GM12878 (cell line): ENCODE measurements at regions of chr14 and their contacts with region 1.

Region 1: GRCh38 chr14:55191203-55192053 is at the start of gene DLGAP5:
- DNase-seq: peak; percentile 98
- ATAC-seq: peak; percentile 98
- H3K4me3 ChIP-seq: peak within 1 kb of the TSS; percentile 85
- H3K27ac ChIP-seq: peak within 1 kb of the TSS; percentile 77
- H3K4me1 ChIP-seq: peaks cover 4% of the 10 kb centered on the region; the same call in 1 of the 2 replicates
- H3K27me3 ChIP-seq: no peaks in the 10 kb centered on the region
- CTCF ChIP-seq: no peak
- EP300 ChIP-seq: no peak
- POLR2A ChIP-seq: peak; percentile 77
- RAD21 ChIP-seq: no peak
- polyA plus RNA-seq, gene DLGAP5: 57.9 to 68.4 TPM

Region 2: DNA sequence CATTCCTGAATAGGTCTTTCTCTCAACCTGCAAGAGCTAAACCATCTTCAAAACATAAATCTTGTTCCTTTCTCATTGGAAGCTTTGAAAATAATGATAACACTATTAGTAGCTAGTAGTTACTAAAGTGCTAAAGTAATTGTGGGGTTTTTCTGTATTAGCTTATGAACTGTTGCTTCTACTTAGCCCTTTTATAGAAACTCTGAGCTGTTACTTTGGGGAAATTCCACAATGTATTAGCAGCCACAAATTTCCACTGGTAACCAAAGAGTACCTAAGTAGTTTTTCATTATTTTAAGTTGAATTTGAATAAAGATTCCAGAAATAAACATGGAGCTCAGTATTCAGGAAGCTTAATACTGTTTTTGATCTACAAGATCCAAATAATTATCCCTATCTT is 146.3 kb before region 1 on chr14:
- CTCF ChIA-PET with region 1: interaction called, 3 read pairs
- POLR2A ChIA-PET with region 1: interaction called, 11 read pairs
- RAD21 ChIA-PET with region 1: no interaction called
- SMC1A ChIA-PET with region 1: no interaction called
- in situ Hi-C with region 1: no loop called
- intact Hi-C with region 1: no loop called
- DNase-seq: no peak
- ATAC-seq: peak; percentile 82
- H3K4me3 ChIP-seq: no peak overlapping the region
- H3K27ac ChIP-seq: peak overlapping the region; percentile 19; the same call in 1 of the 2 replicates
- H3K4me1 ChIP-seq: 0 out of 2 replicates have a peak, but pooled peaks cover 4% of the 10 kb centered on the region
- H3K27me3 ChIP-seq: no peaks in the 10 kb centered on the region
- CTCF ChIP-seq: no peak
- EP300 ChIP-seq: no peak
- POLR2A ChIP-seq: no peak
- RAD21 ChIP-seq: no peak

Region 3: GRCh38 chr14:55123101-55123500 is 68.3 kb before region 1 on chr14:
- CTCF ChIA-PET with region 1: no interaction called
- POLR2A ChIA-PET with region 1: no interaction called
- RAD21 ChIA-PET with region 1: no interaction called
- SMC1A ChIA-PET with region 1: no interaction called
- in situ Hi-C with region 1: no loop called
- intact Hi-C with region 1: no loop called
- DNase-seq: no peak
- ATAC-seq: peak; percentile 35
- H3K4me3 ChIP-seq: no peak overlapping the region
- H3K27ac ChIP-seq: no peak overlapping the region
- H3K4me1 ChIP-seq: peaks cover 6% of the 10 kb centered on the region; the same call in 1 of the 2 replicates
- H3K27me3 ChIP-seq: no peaks in the 10 kb centered on the region
- CTCF ChIP-seq: no peak
- EP300 ChIP-seq: no peak
- POLR2A ChIP-seq: no peak
- RAD21 ChIP-seq: no peak

Region 4: DNA sequence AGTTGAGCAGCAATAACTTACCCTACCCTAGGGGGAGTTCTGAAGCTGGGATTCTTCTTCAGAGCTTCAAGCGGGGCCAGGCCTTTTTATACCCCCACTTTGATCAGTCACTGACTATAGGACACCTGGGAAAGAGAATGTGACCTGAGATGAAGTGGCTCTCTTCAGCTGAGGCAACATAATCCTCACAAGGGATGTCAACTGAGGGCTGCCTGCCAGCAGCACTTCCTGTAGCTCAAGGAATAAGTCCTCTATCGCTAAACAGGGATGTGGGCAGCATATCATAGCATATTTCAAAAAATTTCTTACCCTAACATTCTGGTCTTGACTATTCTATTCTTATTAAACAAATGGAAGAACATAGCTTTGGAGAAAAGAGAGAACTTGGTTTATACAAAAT is 45.0 kb before region 1 on chr14:
- CTCF ChIA-PET with region 1: no interaction called
- POLR2A ChIA-PET with region 1: interaction called, 11 read pairs
- RAD21 ChIA-PET with region 1: no interaction called
- SMC1A ChIA-PET with region 1: no interaction called
- in situ Hi-C with region 1: no loop called
- intact Hi-C with region 1: no loop called
- DNase-seq: no peak
- ATAC-seq: no peak
- H3K4me3 ChIP-seq: no peak overlapping the region
- H3K27ac ChIP-seq: no peak overlapping the region
- H3K4me1 ChIP-seq: no peaks in the 10 kb centered on the region
- H3K27me3 ChIP-seq: no peaks in the 10 kb centered on the region
- CTCF ChIP-seq: no peak
- EP300 ChIP-seq: no peak
- POLR2A ChIP-seq: no peak
- RAD21 ChIP-seq: no peak

Region 5: DNA sequence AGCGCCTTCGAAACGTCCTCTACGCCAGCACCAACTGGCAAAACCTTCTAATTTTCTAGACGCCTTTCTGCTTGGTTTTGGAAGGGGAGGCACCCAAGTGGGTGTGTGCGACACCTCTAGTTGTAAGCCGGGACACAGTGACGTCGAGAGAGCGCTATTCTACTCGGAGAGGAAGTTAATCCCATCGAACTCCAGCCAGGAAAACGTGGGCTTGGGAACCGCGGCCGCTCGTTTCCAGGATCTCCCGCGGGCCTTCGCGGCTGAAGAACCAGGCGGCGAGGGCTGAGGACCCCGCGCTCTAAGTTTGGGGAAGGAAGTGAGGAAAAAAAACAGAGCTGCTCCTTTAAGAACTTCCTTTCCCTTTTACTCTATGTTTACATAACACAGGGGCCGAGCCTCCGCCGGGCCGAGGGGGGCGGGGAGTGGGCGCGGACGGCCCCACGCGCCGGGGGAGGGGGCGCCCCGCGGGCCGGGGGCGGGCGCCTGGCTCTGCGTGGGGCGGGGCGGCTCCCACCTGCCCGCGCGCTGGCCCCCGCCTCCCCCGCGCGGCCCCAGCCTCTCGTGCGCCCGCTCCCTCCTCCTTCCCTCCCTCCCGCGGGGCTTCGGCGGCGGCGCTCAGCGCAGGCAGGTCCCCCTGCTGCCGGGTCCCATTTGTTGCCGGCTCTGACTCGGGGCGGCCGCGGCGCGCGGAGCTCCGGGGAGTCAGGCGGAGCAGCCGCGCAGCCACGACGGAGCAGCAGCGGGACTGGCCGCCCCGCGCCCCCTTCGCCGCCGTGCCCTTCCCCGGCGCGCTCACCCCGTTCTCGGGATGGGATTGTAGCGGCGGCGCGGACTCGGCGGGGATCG is 926.6 kb after region 1 on chr14 and contains the start of gene PELI2:
- CTCF ChIA-PET with region 1: no interaction called
- POLR2A ChIA-PET with region 1: no interaction called
- RAD21 ChIA-PET with region 1: no interaction called
- SMC1A ChIA-PET with region 1: no interaction called
- in situ Hi-C with region 1: no loop called
- intact Hi-C with region 1: loop called (anchors 10 kb)
- DNase-seq: no peak
- ATAC-seq: peak; percentile 82
- H3K4me3 ChIP-seq: peak within 1 kb of the TSS; percentile 78
- H3K27ac ChIP-seq: no peak within 1 kb of the TSS
- H3K4me1 ChIP-seq: peaks cover 4% of the 10 kb centered on the region; the same call in 1 of the 2 replicates
- H3K27me3 ChIP-seq: peaks cover 4 to 20% of the 10 kb centered on the region in 2 experiments; a peak in 3 of 4 replicates
- CTCF ChIP-seq: no peak
- EP300 ChIP-seq: no peak
- POLR2A ChIP-seq: peak; percentile 61; the same call in 1 of the 2 replicates
- RAD21 ChIP-seq: no peak
- polyA plus RNA-seq, gene PELI2: 0.10 TPM in 1 of 2 experiments, not detected in the other